ENCODE measurements at regions of chr11 and their contacts with region 1.

Region 1: DNA sequence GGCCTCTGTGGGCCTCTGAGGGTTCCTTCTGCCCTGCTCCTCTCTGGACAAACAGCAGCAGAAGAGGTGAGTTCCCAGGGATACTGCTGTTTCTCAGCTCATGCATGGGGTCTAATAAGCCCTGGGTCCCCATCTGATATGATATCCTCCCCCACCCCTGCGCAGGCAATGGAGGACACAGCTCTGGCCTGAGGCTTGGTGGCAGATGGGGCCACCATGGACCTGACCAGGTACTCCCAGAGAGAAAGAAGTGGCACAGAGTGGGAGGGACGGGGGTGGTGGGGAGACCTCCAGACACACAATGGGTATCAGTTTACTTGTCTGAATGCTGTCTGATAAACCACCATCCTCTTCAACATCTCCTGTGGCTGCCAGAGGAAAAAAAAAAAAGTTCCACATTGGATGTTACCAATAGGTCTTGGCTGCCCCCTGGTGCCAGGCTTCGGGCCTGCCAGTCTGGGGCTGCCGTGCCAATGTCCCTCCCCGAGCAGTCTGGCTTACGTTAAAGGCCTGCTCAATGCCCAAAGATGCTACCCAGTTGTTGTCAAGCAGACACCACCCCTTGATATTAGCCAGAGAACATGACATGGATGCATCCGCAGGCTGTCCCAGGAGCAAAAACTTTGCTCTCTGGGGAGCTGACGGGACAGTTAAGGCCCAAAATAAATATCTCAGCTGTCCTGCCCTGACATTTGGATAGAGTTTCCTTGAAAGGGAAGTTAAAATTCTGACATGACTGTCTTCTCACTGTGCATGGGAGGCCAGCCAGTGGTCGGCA is 27.9 kb upstream of the ABCC8 start:
- DNase-seq: peak; percentile 89 to 90
- H3K4me3 ChIP-seq: no peak overlapping the region
- H3K27ac ChIP-seq: no peak overlapping the region
- H3K4me1 ChIP-seq: no peaks in the 10 kb centered on the region
- H3K27me3 ChIP-seq: no peaks in the 10 kb centered on the region
- CTCF ChIP-seq: peak; percentile 84 to 98 (median 94)
- POLR2A ChIP-seq: no peak

Region 2: DNA sequence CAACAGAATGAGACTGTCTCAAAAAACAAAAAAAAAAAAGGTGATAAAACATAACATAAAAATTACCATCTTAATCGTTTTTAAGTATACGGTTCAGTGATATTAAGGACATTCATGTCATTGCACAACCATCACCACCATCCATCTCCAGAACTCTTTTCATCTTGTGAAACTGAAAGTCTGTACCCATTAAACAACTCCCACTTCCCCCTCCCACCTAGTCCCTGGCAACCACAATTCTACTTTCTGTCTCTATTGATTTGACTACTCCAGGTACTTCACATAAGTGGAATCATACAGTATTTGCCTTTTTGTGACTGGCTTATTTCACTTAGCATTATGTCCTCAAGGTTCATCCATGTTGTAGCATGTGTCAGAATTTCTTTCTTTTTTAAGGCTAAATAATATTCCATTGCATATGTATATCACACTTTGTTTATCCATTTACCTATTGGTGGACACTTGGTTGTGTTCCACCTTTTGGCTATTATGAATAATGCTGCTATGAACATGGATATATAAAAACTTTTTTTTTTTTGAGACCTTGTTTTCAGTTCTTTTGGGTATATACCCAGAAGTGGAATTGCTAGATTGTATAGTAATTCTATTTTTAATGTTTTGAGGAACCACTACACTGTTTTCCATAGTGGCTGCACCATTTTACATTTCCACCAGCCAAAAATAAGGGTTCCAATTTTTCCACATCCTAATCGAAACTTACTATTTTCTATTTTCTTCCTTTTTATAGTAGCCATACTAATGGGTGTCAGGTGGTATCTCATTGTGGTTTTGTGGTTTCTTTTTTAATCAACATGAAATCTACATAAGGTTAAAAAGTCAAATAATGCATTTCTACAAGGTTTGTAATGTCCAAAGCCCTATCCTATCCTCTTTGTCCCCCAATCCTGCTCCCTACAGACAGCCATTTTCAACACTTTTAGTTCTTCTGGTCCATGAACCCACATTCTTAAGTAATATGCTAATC is 273.4 kb before region 1 on chr11:
- intact Hi-C with region 1: loop called (anchors 10 kb)
- DNase-seq: no peak
- H3K4me3 ChIP-seq: no peak overlapping the region
- H3K27ac ChIP-seq: no peak overlapping the region
- H3K4me1 ChIP-seq: no peaks in the 10 kb centered on the region
- H3K27me3 ChIP-seq: no peaks in the 10 kb centered on the region
- CTCF ChIP-seq: no peak
- POLR2A ChIP-seq: no peak

Region 3: DNA sequence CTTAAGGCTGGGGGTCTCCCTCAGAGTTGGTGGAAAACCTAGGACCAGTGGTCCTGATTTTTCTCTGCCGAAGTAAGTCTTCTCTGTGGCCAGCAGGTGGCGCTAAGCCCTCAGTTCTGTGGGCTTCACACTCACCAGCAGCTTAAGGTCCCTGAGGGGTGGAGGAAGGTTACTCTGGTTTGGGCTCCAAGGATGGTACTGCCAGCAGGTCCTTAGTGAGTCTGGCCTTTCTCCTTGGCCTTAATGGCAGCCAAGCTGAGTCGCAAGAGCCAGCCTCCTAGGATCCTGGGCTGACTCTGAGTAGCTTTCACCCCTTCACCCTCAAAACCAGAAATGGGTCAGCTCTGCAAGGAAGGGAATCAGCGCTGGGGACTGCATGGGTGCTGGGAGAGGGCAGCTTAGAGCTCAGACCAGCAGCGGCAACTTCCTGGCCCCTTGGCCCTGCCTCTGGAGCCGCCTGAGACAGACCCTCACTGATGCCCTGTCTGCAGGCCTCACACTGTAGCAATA is 120.5 kb before region 1 on chr11:
- intact Hi-C with region 1: loop called (anchors 2 kb)
- DNase-seq: peak; percentile 83 to 93
- H3K4me3 ChIP-seq: no peak overlapping the region
- H3K27ac ChIP-seq: no peak overlapping the region
- H3K4me1 ChIP-seq: peaks cover 14 to 26% of the 10 kb centered on the region in 2 donors
- H3K27me3 ChIP-seq: no peaks in the 10 kb centered on the region
- CTCF ChIP-seq: peak; percentile 80 to 96 (median 88)
- POLR2A ChIP-seq: no peak